ENCODE measurements at regions of chr11 and their contacts with region 1.

Region 1: DNA sequence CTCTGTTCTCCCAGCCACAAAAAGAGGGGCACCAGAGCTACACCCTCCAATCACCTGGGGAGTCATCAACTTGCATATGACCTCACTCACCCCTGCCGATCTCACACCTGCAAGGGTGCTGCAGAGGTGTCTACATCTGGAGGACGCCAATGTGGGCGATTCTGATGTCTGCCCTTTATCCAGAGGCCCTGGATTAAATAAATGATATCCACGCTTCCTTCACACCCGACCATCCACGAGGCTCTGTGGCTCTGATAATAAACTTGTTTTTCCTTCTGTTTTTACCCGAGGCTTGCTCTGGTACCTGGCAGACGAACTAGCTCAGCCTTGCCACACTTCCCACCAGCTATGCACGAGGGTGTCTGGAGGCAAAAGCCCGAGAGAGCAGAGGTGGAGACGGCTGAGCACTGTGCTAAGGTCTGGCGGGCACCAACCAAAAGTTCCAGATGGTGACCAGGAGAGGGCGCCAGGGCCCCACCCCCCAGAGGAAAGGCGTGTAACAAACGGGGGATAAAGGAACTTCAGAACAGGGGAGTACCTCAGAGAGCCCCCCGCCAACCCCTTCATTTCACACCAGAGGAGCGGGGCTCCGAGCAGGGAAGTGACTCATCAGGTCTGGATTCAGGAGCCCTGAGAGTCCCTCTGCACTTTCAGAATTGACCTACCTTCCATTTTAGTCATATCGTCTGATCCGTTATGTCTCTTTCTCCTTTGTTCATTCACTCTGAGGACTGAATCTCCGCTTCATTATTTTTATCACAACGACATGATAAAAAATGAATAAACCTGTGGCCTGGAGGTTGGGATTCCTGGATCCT is 13.5 kb downstream of the SCN3B start:
- DNase-seq: peak; percentile 26 to 72
- ATAC-seq: peak; percentile 60 to 70 (median 62)
- H3K4me3 ChIP-seq: no peak overlapping the region
- H3K4me3 Mint-ChIP-seq: no peak overlapping the region
- H3K27ac ChIP-seq: no peak overlapping the region
- H3K27ac Mint-ChIP-seq: no peak overlapping the region
- H3K4me1 ChIP-seq: no peaks in the 10 kb centered on the region
- H3K4me1 Mint-ChIP-seq: peaks cover 5 to 8% of the 10 kb centered on the region in 2 donors
- H3K27me3 ChIP-seq: no peaks in the 10 kb centered on the region
- H3K27me3 Mint-ChIP-seq: peaks cover 15 to 27% of the 10 kb centered on the region in 2 donors
- CTCF ChIP-seq: peak; percentile 58

Region 2: DNA sequence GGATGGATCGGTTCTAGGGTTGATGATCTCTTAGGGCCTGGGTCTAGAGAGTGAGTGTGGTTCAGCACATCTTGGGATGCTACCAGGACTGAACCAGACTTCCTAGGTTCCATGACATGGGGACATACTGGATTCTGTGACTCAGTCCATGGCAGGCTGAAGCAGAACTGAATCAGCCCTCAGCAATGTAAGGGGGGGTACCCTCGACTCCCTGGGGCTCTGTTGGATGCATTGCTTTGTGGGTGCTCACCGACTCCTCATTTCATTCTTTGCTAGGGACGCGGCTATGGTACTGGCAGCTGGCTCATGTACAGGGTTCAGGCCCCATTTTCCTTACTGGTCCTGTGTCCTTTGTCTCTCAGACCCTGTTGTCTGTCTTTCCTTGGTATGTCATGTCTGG is 211.6 kb before region 1 on chr11:
- intact Hi-C with region 1: no loop called
- DNase-seq: no peak
- ATAC-seq: no peak
- H3K4me3 ChIP-seq: no peak overlapping the region
- H3K4me3 Mint-ChIP-seq: peak overlapping the region; percentile 93
- H3K27ac ChIP-seq: no peak overlapping the region
- H3K27ac Mint-ChIP-seq: peak overlapping the region in 1 of 2 donors; percentile 80
- H3K4me1 ChIP-seq: peaks cover 20% of the 10 kb centered on the region
- H3K4me1 Mint-ChIP-seq: peaks cover 10 to 25% of the 10 kb centered on the region in 2 donors
- H3K27me3 ChIP-seq: no peaks in the 10 kb centered on the region
- H3K27me3 Mint-ChIP-seq: peaks cover 3 to 23% of the 10 kb centered on the region in 2 donors
- CTCF ChIP-seq: no peak

Region 3: GRCh38 chr11:123707606-123708205 is 66.8 kb after region 1 on chr11:
- intact Hi-C with region 1: loop called (anchors 1 kb)
- DNase-seq: peak in 1 of 2 donors; percentile 79
- ATAC-seq: peak in 1 of 3 donors; percentile 51
- H3K4me3 ChIP-seq: no peak overlapping the region
- H3K4me3 Mint-ChIP-seq: no peak overlapping the region
- H3K27ac ChIP-seq: no peak overlapping the region
- H3K27ac Mint-ChIP-seq: no peak overlapping the region
- H3K4me1 ChIP-seq: no peaks in the 10 kb centered on the region
- H3K4me1 Mint-ChIP-seq: no peaks in the 10 kb centered on the region
- H3K27me3 ChIP-seq: no peaks in the 10 kb centered on the region
- H3K27me3 Mint-ChIP-seq: peaks cover 0 to 8% of the 10 kb centered on the region in 2 donors
- CTCF ChIP-seq: peak; percentile 53